Esophagus squamous epithelium (tissue), 5 donors: ENCODE measurements at regions of chr1 and their contacts with region 1.

Region 1: DNA sequence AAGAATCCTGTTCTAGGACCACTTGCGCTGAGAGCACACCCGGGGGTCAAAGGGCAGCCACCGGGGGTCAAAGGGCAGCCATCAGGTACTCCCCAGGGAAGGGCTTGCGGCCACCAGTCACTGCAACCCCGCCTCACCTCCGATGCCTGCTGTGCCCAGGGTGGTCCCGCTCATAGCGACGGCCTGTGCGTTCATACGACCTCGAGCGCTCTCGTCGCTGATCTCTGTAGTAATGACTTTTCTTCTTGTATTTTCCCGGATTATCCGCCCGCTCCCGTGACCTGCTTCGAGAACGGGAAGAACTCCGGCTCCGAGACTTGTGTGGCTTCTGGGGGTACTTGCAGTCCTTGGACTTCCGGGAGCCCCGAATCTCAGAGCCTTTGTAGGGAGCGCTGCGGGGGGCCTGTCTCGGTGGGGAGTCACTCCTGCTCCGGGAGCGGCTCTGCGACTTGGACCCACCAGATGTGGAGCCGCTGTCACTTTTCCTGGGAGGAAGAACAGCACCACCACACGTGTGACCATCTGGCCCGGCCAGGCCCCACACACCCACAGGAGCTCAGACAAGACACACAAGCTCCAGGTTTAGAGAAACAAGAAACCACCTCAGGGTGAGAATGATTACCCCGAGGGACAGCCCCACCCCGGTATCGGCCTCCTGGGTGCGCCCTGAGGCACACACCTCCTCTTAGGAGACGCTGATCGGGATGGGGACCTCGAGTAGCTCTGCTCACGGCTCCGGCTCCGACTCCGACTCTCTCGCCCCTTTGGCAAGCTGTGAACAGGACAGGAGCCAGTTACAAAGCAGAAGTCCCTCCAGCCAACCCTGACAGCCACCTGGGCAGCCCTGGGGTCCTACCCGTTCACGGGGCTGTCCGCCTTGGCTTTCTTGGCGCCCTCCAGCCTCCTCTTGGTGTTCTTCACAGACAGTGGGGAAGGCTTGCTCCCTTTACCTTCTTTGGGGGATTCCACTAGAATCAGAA is 11.7 kb downstream of the CCNL2 start:
- DNase-seq: no peak
- H3K4me3 ChIP-seq: no peak overlapping the region
- H3K27ac ChIP-seq: no peak overlapping the region
- H3K4me1 ChIP-seq: no peaks in the 10 kb centered on the region
- H3K27me3 ChIP-seq: no peaks in the 10 kb centered on the region
- CTCF ChIP-seq: no peak
- POLR2A ChIP-seq: no peak

Region 2: GRCh38 chr1:1511533-1512285 is 124.3 kb after region 1 on chr1 and contains the start of gene ATAD3A:
- intact Hi-C with region 1: loop called (anchors 10 kb)
- DNase-seq: peak; percentile 65
- H3K4me3 ChIP-seq: peak within 1 kb of the TSS; percentile 64 to 84 (median 82)
- H3K27ac ChIP-seq: peak within 1 kb of the TSS; percentile 90 to 95 (median 94)
- H3K4me1 ChIP-seq: peaks cover 5 to 21% (median 10%) of the 10 kb centered on the region in 3 donors
- H3K27me3 ChIP-seq: no peaks in the 10 kb centered on the region
- CTCF ChIP-seq: peak in 3 of 6 experiments; percentile 16 to 30 (median 21)
- POLR2A ChIP-seq: peak in 2 of 4 donors; percentile 62 to 68
- total RNA-seq, gene ATAD3A: 27.0 to 53.8 (median 32.6) TPM